Heart right ventricle (tissue), 16 donors: ENCODE measurements at regions of chr5 and their contacts with region 1.

Region 1: DNA sequence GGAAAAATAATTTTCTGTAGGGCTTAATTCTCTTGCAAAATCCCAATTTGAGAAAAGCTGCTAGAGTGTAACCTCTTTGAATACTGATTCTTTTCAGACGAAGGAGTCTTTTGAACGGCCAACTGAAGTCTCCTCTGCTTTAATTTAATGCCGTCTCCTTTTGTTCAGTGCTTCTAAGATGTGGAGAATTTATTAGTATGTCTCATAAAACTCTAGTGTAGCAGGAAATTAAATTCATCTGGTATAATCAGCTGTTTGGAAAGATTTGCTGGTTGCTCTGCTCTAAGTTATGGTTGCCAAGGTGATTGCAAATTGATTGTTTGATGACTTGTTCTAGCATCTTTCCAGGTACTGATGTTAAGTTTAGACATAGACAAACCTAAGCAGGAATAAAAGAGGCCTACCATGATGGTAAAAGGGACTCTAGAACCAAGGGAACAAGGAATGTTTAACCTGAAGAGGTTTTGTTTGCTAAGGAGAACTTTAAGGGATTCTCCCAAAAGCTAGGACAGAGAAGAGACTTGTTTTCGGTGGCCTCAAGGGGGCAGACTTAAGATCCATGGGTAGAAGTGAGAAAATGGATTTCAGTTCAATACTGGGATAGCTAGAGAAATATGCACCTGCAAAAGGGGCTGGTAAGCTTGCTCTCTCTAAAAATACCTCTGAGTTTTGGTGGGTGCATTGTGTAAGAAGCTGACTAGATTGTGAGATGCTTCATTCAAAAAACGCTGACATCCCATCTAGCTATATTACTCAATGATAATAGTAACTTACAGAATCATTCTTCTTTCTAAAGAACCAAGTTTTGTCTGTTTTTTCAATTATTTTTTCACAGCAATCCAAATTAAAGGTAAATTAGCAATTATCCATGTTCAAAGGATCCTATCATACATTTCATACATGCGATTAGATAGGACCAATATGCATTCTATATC is 5.7 kb upstream of the ADRB2 start:
- DNase-seq: no peak
- ATAC-seq: peak in 1 of 8 donors; percentile 59
- H3K4me3 ChIP-seq: no peak overlapping the region
- H3K27ac ChIP-seq: no peak overlapping the region
- H3K4me1 ChIP-seq: peaks cover 0 to 44% (median 10%) of the 10 kb centered on the region in 9 donors
- H3K27me3 ChIP-seq: no peaks in the 10 kb centered on the region
- CTCF ChIP-seq: peak in 8 of 9 donors; percentile 40 to 77 (median 66)

Region 2: DNA sequence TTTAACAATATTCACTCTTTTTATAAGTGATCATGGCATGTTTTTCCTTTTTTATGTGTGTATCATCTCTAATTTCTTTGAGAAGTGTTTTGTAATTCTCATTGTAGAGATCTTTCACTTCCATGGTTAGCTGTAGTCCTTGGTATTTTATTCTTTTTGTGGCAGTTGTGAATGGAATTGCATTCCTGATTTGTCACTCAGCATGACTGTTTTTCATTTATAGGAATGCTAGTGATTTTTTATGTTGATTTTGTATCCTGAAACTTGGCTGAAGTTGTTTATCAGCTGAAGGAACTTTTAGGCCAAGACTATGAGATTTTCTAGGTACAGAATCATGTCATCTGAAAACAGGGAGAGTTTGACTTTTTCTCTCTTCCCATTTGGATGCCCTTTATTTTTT is 565.3 kb before region 1 on chr5:
- intact Hi-C with region 1: no loop called
- DNase-seq: no peak
- ATAC-seq: no peak
- H3K4me3 ChIP-seq: no peak overlapping the region
- H3K27ac ChIP-seq: no peak overlapping the region
- H3K4me1 ChIP-seq: no peaks in the 10 kb centered on the region
- H3K27me3 ChIP-seq: no peaks in the 10 kb centered on the region
- CTCF ChIP-seq: no peak

Region 3: DNA sequence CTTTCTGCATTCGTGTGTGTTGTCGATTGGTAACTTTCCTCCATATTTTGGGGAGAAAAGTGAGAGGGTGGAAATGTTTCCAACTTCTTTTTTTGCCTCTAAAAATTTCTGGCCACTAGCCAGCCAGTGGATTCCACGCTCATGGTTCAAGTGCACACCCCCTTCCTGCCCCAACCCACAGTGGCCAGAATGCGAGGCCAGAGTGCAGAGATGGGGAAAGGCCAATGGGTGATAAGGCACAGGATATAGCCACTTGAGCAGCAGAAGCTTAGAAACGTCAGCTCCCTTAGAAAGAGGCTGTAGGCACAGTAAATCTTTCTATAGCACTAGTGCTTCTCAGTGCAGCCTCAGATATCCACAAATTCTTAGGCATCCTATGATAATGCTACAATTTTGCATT is 70.1 kb before region 1 on chr5:
- intact Hi-C with region 1: loop called in 3 of 10 experiments (anchors 5 to 10 kb)
- DNase-seq: no peak
- ATAC-seq: no peak
- H3K4me3 ChIP-seq: no peak overlapping the region
- H3K27ac ChIP-seq: no peak overlapping the region
- H3K4me1 ChIP-seq: peaks cover 0 to 44% (median 9%) of the 10 kb centered on the region in 9 donors
- H3K27me3 ChIP-seq: no peaks in the 10 kb centered on the region
- CTCF ChIP-seq: no peak

Region 4: DNA sequence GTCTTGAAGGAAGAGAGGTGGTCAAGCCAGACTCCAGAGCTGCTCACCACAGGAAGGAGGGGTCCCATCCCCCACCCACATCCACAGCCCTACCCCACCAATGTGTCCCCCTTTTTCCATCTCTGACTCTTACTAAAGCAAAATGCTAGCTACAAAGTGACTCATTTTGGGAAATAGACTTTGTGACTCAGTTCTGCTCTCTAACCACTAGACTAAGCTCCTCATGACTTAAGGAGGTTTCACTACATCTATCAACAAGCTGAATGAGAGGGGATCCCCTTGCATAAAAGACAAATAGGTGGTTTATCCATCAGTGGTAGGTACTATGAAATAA is 29.4 kb before region 1 on chr5:
- intact Hi-C with region 1: no loop called
- DNase-seq: no peak
- ATAC-seq: no peak
- H3K4me3 ChIP-seq: no peak overlapping the region
- H3K27ac ChIP-seq: no peak overlapping the region
- H3K4me1 ChIP-seq: peaks cover 0 to 27% (median 0%) of the 10 kb centered on the region in 9 donors
- H3K27me3 ChIP-seq: peaks cover 0 to 4% (median 0%) of the 10 kb centered on the region in 7 donors
- CTCF ChIP-seq: no peak

Region 5: DNA sequence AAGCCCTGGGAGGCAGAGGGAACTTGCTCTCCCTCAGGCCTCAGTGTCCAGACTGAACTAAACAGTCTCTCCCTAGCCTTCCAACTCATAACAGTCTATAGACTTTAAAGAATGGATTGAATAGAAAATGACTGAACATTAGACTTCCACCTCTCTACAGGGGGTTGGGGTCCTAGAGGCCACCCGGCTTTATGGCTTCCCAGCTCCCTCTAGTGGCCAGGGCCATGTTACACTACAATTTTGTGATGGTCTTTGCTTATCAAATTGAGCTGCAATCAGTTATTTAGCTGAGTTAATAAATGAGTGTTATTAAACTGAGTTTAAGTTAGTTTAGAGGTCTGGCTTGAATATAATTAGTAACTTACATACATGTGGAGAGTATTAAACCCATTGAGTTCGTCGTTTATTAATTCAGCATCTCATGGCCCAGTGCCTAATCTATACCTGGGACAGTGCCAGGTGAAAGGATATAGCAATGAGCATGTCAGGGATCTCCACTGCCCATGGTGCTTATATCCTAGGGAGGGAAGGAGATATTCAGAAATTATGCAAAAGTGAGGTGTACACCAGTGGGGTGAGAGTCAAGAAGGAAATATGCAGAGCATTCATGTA is 137.0 kb after region 1 on chr5:
- intact Hi-C with region 1: loop called in 7 of 10 experiments (anchors 2 to 10 kb)
- DNase-seq: no peak
- ATAC-seq: peak in 4 of 8 donors; percentile 38 to 53 (median 46)
- H3K4me3 ChIP-seq: no peak overlapping the region
- H3K27ac ChIP-seq: no peak overlapping the region
- H3K4me1 ChIP-seq: peaks cover 0 to 9% (median 0%) of the 10 kb centered on the region in 9 donors
- H3K27me3 ChIP-seq: no peaks in the 10 kb centered on the region
- CTCF ChIP-seq: peak; percentile 68 to 87 (median 81)

Region 6: DNA sequence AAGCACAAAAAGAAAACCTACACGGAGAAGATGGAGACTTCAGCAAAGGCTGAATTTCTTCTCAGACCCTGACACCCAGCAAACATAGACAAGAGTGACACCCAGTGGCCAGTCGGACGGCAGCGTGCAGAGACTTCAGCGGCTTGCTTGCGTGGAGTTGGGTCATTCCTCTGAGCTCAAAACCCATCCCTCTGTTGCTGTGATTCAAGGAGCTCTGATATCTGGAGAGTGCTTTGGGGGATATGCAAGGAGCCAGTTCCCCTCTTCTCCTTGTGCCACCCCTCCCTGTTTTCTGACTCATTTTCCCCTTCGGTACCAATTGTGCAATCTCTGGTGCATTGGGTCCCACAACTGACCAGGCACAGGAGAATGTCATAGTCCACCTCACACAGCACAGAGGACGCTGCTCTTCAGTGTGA is 214.7 kb after region 1 on chr5:
- intact Hi-C with region 1: loop called in 1 of 10 experiments (anchors 5 kb)
- DNase-seq: peak; percentile 70 to 81
- ATAC-seq: peak; percentile 83 to 94 (median 91)
- H3K4me3 ChIP-seq: no peak overlapping the region
- H3K27ac ChIP-seq: no peak overlapping the region
- H3K4me1 ChIP-seq: peaks cover 0 to 53% (median 25%) of the 10 kb centered on the region in 9 donors
- H3K27me3 ChIP-seq: no peaks in the 10 kb centered on the region
- CTCF ChIP-seq: peak; percentile 64 to 95 (median 90)

Region 7: GRCh38 chr5:150022163-150022540 is 1201.4 kb after region 1 on chr5:
- intact Hi-C with region 1: no loop called
- DNase-seq: peak in 1 of 2 donors; percentile 61
- ATAC-seq: peak; percentile 65 to 89 (median 78)
- H3K4me3 ChIP-seq: peak overlapping the region in 2 of 10 donors; percentile 28 to 30
- H3K27ac ChIP-seq: peak overlapping the region; percentile 7 to 83 (median 70)
- H3K4me1 ChIP-seq: peaks cover 5 to 62% (median 53%) of the 10 kb centered on the region in 9 donors
- H3K27me3 ChIP-seq: no peaks in the 10 kb centered on the region
- CTCF ChIP-seq: no peak